Activated CD8-positive, alpha-beta T cell treated with anti-CD3 and anti-CD28 coated beads for 36 hours (primary cell): ENCODE measurements at regions of chr2 and their contacts with region 1.

Region 1: DNA sequence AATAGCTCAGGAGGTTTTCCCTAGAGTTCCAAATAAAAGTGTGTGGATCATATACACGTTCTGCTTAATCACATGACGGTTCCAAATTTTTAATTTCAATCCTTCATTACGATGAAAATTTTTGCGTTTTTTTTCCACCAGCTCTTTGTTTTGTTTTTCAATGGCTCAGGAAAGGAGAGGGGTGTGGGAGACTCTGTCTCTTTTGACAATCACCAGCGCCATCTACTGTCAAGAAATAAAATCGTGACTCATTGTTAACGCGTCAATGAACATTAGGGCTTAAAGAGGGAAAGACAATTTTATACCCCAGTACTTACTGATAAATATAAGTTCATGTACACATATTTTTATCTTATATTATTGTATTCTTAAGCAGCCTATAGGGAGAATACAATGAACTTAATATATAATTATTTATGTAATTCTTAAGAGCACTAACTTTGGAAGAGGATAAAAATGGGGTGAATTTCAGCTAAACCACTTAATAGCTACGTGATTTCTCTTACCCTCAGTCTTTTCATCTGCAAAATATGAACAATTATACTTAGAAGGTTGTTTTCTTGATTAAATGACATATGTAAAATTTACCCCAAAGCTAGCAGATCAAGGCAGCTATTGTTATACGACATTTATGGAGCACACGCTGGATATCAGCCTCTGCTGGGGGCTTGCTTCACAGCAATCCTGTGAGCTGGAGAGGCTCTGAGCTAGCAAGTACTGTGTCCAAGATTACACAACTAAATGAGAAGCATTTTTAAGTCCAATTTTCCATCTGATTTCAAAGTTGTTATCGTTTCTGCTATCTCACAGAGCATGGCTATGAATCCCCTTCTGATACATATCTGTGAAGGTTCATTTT is 47.4 kb upstream of the RMDN2 start:
- DNase-seq: no peak
- ATAC-seq: peak; percentile 76
- H3K4me3 Mint-ChIP-seq: no peak overlapping the region
- H3K27ac Mint-ChIP-seq: no peak overlapping the region
- H3K4me1 Mint-ChIP-seq: peaks cover 20% of the 10 kb centered on the region
- H3K27me3 Mint-ChIP-seq: peaks cover 12% of the 10 kb centered on the region
- CTCF ChIP-seq: peak; percentile 85

Region 2: GRCh38 chr2:37405781-37406180 is 471.9 kb before region 1 on chr2:
- CTCF ChIA-PET with region 1: interaction called, 157 read pairs
- POLR2A ChIA-PET with region 1: no interaction called
- intact Hi-C with region 1: loop called (anchors 5 kb)
- DNase-seq: no peak
- ATAC-seq: no peak
- H3K4me3 Mint-ChIP-seq: no peak overlapping the region
- H3K27ac Mint-ChIP-seq: no peak overlapping the region
- H3K4me1 Mint-ChIP-seq: no peaks in the 10 kb centered on the region
- H3K27me3 Mint-ChIP-seq: peaks cover 2% of the 10 kb centered on the region
- CTCF ChIP-seq: no peak

Region 3: DNA sequence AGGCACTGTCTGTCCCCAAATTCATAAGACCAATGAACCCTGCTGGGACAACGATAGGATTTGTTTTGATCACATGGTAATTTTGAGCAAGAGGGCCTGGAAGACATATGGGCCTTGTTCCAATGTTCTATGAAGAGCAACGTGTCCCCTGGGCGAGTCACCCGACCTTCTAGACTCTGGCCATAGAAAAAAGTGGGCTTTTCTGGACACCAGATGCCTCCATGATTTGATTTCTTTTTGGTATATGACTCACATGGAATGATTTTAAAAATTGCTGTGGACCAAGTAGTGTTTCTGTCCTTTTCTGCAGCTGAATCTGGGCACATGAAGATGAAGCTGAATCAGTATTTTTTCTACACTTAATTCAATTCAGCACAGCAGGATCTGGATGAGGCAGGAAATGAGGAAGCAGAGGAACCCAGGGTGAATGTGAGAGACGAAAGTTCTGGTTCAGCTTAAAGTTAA is 311.1 kb before region 1 on chr2:
- CTCF ChIA-PET with region 1: interaction called, 11 read pairs
- POLR2A ChIA-PET with region 1: no interaction called
- intact Hi-C with region 1: no loop called
- DNase-seq: no peak
- ATAC-seq: no peak
- H3K4me3 Mint-ChIP-seq: no peak overlapping the region
- H3K27ac Mint-ChIP-seq: no peak overlapping the region
- H3K4me1 Mint-ChIP-seq: peaks cover 48% of the 10 kb centered on the region
- H3K27me3 Mint-ChIP-seq: no peaks in the 10 kb centered on the region
- CTCF ChIP-seq: no peak

Region 4: GRCh38 chr2:37664231-37664643 is 213.4 kb before region 1 on chr2:
- CTCF ChIA-PET with region 1: interaction called, 12 read pairs
- POLR2A ChIA-PET with region 1: no interaction called
- intact Hi-C with region 1: loop called (anchors 10 kb)
- DNase-seq: no peak
- ATAC-seq: no peak
- H3K4me3 Mint-ChIP-seq: no peak overlapping the region
- H3K27ac Mint-ChIP-seq: peak overlapping the region; percentile 54
- H3K4me1 Mint-ChIP-seq: peaks cover 83% of the 10 kb centered on the region
- H3K27me3 Mint-ChIP-seq: no peaks in the 10 kb centered on the region
- CTCF ChIP-seq: no peak

Region 5: DNA sequence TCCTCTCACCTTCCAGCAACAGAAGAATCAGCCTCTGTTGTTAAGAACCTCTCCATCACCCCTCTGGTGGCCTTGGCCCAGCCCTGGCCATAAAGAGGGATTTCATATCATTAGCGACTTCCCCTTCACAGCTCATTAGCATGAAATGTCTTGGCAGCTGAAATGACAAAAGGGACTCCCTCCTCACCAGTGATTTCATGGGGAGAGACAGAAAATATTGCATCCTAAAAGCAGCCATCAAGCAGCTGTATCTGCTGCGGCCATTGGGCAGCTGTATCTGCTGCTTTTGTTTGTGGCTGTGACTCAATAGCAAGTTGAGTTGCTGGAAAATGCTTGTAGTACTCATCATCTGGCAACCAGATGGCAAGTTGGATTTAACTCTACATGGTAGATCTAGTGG is 58.5 kb before region 1 on chr2:
- CTCF ChIA-PET with region 1: interaction called, 12 read pairs
- POLR2A ChIA-PET with region 1: no interaction called
- intact Hi-C with region 1: no loop called
- DNase-seq: no peak
- ATAC-seq: no peak
- H3K4me3 Mint-ChIP-seq: no peak overlapping the region
- H3K27ac Mint-ChIP-seq: no peak overlapping the region
- H3K4me1 Mint-ChIP-seq: peaks cover 13% of the 10 kb centered on the region
- H3K27me3 Mint-ChIP-seq: no peaks in the 10 kb centered on the region
- CTCF ChIP-seq: no peak

Region 6: GRCh38 chr2:37851828-37852584 is 25.7 kb before region 1 on chr2:
- CTCF ChIA-PET with region 1: interaction called, 38 read pairs
- POLR2A ChIA-PET with region 1: interaction called, 3 read pairs
- intact Hi-C with region 1: no loop called
- DNase-seq: no peak
- ATAC-seq: peak; percentile 59
- H3K4me3 Mint-ChIP-seq: peak overlapping the region; percentile 5
- H3K27ac Mint-ChIP-seq: peak overlapping the region; percentile 53
- H3K4me1 Mint-ChIP-seq: peaks cover 22% of the 10 kb centered on the region
- H3K27me3 Mint-ChIP-seq: no peaks in the 10 kb centered on the region
- CTCF ChIP-seq: no peak